B cell (primary cell): ENCODE measurements at regions of chr12 and their contacts with region 1.

Region 1: DNA sequence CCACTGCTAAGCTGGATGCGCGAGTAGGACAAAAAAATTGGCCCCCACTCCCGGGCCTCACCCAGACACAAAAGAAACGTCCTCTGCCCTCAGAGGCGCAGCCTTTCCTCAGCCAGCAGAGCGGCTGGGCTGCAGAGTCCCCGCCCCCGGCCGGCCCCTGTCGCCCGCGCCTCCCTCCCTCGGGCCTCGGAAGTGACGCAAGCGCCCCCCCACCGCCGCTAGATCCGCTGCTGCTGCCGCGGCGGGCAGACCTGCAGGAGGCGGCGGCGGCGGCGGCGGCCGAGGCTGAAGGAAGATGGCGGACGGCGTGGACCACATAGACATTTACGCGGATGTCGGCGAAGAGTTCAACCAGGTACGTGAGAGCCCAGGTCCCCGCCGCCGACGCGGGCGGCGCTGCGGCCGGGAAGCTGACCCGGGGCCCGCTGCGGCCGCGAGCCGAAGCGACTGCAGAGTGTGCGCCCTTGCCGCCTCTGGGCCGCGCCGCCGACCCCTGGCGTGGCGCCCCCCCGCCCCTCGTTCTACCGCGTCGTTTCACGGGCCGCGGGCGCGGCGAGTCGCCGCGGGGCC is at the start of gene CPSF6:
- DNase-seq: peak; percentile 97
- ATAC-seq: peak; percentile 94
- H3K4me3 ChIP-seq: peak within 1 kb of the TSS; percentile 63 to 91 (median 88)
- H3K4me3 Mint-ChIP-seq: peak within 1 kb of the TSS; percentile 93
- H3K27ac ChIP-seq: peak within 1 kb of the TSS; percentile 80 to 88
- H3K27ac Mint-ChIP-seq: peak within 1 kb of the TSS; percentile 98
- H3K4me1 ChIP-seq: peaks cover 33 to 39% of the 10 kb centered on the region in 2 donors
- H3K4me1 Mint-ChIP-seq: peaks cover 48% of the 10 kb centered on the region
- H3K27me3 ChIP-seq: no peaks in the 10 kb centered on the region
- H3K27me3 Mint-ChIP-seq: no peaks in the 10 kb centered on the region
- CTCF ChIP-seq: no peak
- total RNA-seq, gene CPSF6: 108 and 114 TPM in 2 replicates

Region 2: GRCh38 chr12:68331869-68332727 is 907.3 kb before region 1 on chr12 and contains the start of gene MDM1:
- CTCF ChIA-PET with region 1: no interaction called
- POLR2A ChIA-PET with region 1: no interaction called
- intact Hi-C with region 1: loop called (anchors 5 kb)
- DNase-seq: peak; percentile 97
- ATAC-seq: peak; percentile 97
- H3K4me3 ChIP-seq: peak within 1 kb of the TSS; percentile 79 to 85 (median 82)
- H3K4me3 Mint-ChIP-seq: peak within 1 kb of the TSS; percentile 94
- H3K27ac ChIP-seq: peak within 1 kb of the TSS; percentile 55 to 78
- H3K27ac Mint-ChIP-seq: peak within 1 kb of the TSS; percentile 90
- H3K4me1 ChIP-seq: peaks cover 12 to 14% of the 10 kb centered on the region in 2 donors
- H3K4me1 Mint-ChIP-seq: peaks cover 40% of the 10 kb centered on the region
- H3K27me3 ChIP-seq: no peaks in the 10 kb centered on the region
- H3K27me3 Mint-ChIP-seq: no peaks in the 10 kb centered on the region
- CTCF ChIP-seq: no peak
- total RNA-seq, gene MDM1: 38.3 and 38.9 TPM in 2 replicates

Region 3: DNA sequence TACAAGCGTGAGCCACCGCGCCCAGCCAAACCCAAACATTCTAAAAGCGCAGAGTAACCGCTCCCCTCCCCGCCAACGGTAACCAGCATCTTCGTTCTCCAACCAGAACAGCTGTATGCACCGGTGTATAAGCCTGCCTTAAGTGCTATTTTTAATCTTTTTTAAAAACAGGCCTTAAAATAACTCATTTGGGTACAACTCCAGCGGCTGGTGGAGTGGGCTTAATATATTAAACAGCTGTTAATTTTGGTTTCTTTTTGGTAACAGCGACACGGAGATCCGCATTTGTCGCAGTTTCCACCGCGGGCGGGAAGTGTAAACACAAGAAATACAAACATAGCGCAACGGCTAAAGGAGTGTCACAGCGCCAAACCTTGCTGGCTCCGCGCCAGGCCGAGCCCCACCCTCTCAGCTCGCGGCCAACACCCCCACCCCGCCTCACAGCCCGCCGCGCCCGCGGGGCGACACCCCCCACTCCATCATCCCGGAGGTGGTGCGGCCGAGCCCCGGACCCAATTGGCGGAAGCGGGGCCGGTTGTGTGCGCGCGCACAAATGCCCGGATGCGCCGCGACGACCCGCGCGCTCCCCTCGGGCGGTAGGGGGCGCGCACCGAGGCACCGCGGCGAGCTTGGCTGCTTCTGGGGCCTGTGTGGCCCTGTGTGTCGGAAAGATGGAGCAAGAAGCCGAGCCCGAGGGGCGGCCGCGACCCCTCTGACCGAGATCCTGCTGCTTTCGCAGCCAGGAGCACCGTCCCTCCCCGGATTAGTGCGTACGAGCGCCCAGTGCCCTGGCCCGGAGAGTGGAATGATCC is 431.7 kb before region 1 on chr12 and contains the start of gene MDM2:
- CTCF ChIA-PET with region 1: no interaction called
- POLR2A ChIA-PET with region 1: no interaction called
- intact Hi-C with region 1: loop called (anchors 1 kb)
- DNase-seq: peak; percentile 98
- ATAC-seq: peak; percentile 90
- H3K4me3 ChIP-seq: peak within 1 kb of the TSS; percentile 65 to 95 (median 84)
- H3K4me3 Mint-ChIP-seq: peak within 1 kb of the TSS; percentile 97
- H3K27ac ChIP-seq: peak within 1 kb of the TSS; percentile 92 to 95
- H3K27ac Mint-ChIP-seq: peak within 1 kb of the TSS; percentile 99
- H3K4me1 ChIP-seq: peaks cover 11% of the 10 kb centered on the region in 2 donors
- H3K4me1 Mint-ChIP-seq: peaks cover 17% of the 10 kb centered on the region
- H3K27me3 ChIP-seq: no peaks in the 10 kb centered on the region
- H3K27me3 Mint-ChIP-seq: no peaks in the 10 kb centered on the region
- CTCF ChIP-seq: peak; percentile 76
- total RNA-seq, gene MDM2: 78.7 and 87.0 TPM in 2 replicates

Region 4: GRCh38 chr12:69254046-69254445 is 14.6 kb after region 1 on chr12:
- CTCF ChIA-PET with region 1: interaction called, 18 read pairs
- POLR2A ChIA-PET with region 1: no interaction called
- intact Hi-C with region 1: loop called (anchors 1 kb)
- DNase-seq: peak; percentile 69
- ATAC-seq: peak; percentile 43
- H3K4me3 ChIP-seq: no peak overlapping the region
- H3K4me3 Mint-ChIP-seq: no peak overlapping the region
- H3K27ac ChIP-seq: peak overlapping the region in 1 of 2 donors; percentile 72
- H3K27ac Mint-ChIP-seq: peak overlapping the region; percentile 51
- H3K4me1 ChIP-seq: peaks cover 4 to 18% of the 10 kb centered on the region in 2 donors
- H3K4me1 Mint-ChIP-seq: peaks cover 40% of the 10 kb centered on the region
- H3K27me3 ChIP-seq: no peaks in the 10 kb centered on the region
- H3K27me3 Mint-ChIP-seq: no peaks in the 10 kb centered on the region
- CTCF ChIP-seq: peak; percentile 74

Region 5: DNA sequence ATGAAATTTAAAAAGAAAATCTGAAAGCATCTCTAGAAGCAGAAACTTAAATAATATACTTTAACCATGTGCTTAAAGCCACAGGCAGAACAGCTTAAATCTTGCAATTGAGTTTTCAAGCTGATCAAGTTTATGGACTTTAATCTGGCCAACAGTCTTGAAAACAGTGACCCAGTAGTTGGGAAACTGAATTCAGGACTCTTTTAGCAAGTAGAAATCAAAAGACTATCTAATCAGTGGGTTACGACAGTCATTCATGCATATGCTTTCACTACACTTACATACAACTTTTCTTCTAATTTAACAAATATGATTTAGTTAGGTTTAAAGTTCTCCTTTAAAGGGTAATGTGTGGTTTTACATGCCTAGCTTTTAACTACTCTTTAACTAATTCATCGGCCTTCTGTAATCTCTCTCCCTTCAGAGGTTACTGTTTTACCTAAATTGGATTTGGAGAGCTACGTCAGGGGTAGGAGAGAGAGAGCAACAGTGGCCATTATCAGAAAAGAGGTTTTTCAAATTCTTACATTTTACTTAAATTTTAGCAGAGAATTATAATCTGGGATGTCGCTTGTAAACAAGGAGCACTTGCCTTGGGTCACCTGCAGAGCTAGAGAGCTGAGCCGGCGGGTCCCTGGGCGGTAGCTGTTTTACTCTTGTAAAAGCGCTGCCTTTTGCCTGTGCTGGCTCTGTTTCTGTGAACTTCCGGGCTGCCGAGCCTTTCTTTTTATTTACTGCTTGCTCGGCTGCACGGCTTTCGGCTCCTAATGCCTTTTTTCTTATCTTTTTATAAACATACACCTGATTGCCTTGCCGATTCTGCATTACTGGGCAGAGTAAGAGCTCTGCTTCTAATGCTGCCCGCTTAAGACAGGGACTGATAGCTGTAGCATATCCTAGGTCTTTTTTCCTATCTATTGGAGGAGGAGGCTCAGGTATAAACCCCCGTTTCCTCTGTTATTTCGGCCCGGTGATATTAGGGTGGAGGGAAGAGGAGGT is 91.3 kb after region 1 on chr12:
- CTCF ChIA-PET with region 1: no interaction called
- POLR2A ChIA-PET with region 1: interaction called, 4 read pairs
- intact Hi-C with region 1: loop called (anchors 10 kb)
- DNase-seq: peak; percentile 62
- ATAC-seq: peak; percentile 77
- H3K4me3 ChIP-seq: peak overlapping the region; percentile 46 to 74 (median 65)
- H3K4me3 Mint-ChIP-seq: peak overlapping the region; percentile 91
- H3K27ac ChIP-seq: peak overlapping the region; percentile 83 to 86
- H3K27ac Mint-ChIP-seq: peak overlapping the region; percentile 93
- H3K4me1 ChIP-seq: peaks cover 15 to 20% of the 10 kb centered on the region in 2 donors
- H3K4me1 Mint-ChIP-seq: peaks cover 23% of the 10 kb centered on the region
- H3K27me3 ChIP-seq: no peaks in the 10 kb centered on the region
- H3K27me3 Mint-ChIP-seq: no peaks in the 10 kb centered on the region
- CTCF ChIP-seq: no peak

Region 6: GRCh38 chr12:69585189-69586062 is 346.0 kb after region 1 on chr12 and contains the start of gene CCT2:
- CTCF ChIA-PET with region 1: no interaction called
- POLR2A ChIA-PET with region 1: no interaction called
- intact Hi-C with region 1: loop called (anchors 1 kb)
- DNase-seq: peak; percentile 98
- ATAC-seq: peak; percentile 93
- H3K4me3 ChIP-seq: peak within 1 kb of the TSS; percentile 83 to 96 (median 90)
- H3K4me3 Mint-ChIP-seq: peak within 1 kb of the TSS; percentile 97
- H3K27ac ChIP-seq: peak within 1 kb of the TSS; percentile 91 to 97
- H3K27ac Mint-ChIP-seq: peak within 1 kb of the TSS; percentile 96
- H3K4me1 ChIP-seq: peaks cover 6 to 11% of the 10 kb centered on the region in 2 donors
- H3K4me1 Mint-ChIP-seq: peaks cover 12% of the 10 kb centered on the region
- H3K27me3 ChIP-seq: no peaks in the 10 kb centered on the region
- H3K27me3 Mint-ChIP-seq: no peaks in the 10 kb centered on the region
- CTCF ChIP-seq: peak; percentile 60
- total RNA-seq, gene CCT2: 125 TPM in 2 replicates

Region 7: DNA sequence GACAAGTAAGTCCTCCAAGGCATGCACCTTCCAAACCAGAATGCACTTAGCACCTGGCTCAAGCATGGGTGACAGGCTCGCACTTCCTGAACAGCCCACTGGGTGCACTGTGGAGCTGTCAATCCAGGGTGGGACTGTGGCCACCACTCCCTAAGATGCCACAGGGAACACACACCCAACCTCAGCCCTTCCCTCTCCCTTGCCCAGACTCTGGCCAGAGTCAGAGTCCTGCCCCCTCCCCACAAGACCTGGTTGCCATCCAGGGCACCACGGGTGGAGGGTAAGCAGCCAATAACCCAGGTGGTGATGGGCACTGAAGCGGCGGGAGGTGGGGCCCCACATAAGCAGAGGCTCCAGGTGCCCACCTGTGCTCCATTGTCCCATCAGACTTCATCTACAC is 746.2 kb after region 1 on chr12:
- CTCF ChIA-PET with region 1: no interaction called
- POLR2A ChIA-PET with region 1: no interaction called
- intact Hi-C with region 1: no loop called
- DNase-seq: no peak
- ATAC-seq: no peak
- H3K4me3 ChIP-seq: no peak overlapping the region
- H3K4me3 Mint-ChIP-seq: no peak overlapping the region
- H3K27ac ChIP-seq: no peak overlapping the region
- H3K27ac Mint-ChIP-seq: no peak overlapping the region
- H3K4me1 ChIP-seq: no peaks in the 10 kb centered on the region
- H3K4me1 Mint-ChIP-seq: no peaks in the 10 kb centered on the region
- H3K27me3 ChIP-seq: peaks cover 0 to 3% (median 0%) of the 10 kb centered on the region in 4 experiments
- H3K27me3 Mint-ChIP-seq: no peaks in the 10 kb centered on the region
- CTCF ChIP-seq: no peak